ENCODE measurements at regions of chr17 and their contacts with region 1.

Region 1: GRCh38 chr17:27805520-27806146 is 5.3 kb upstream of the NOS2 start:
- DNase-seq: peak; percentile 87 to 88
- ATAC-seq: peak; percentile 94
- H3K4me3 ChIP-seq: peak overlapping the region in 1 of 2 donors; percentile 2
- H3K27ac ChIP-seq: peak overlapping the region in 1 of 2 donors; percentile 48
- H3K4me1 ChIP-seq: no peaks in the 10 kb centered on the region
- H3K27me3 ChIP-seq: no peaks in the 10 kb centered on the region

Region 2: DNA sequence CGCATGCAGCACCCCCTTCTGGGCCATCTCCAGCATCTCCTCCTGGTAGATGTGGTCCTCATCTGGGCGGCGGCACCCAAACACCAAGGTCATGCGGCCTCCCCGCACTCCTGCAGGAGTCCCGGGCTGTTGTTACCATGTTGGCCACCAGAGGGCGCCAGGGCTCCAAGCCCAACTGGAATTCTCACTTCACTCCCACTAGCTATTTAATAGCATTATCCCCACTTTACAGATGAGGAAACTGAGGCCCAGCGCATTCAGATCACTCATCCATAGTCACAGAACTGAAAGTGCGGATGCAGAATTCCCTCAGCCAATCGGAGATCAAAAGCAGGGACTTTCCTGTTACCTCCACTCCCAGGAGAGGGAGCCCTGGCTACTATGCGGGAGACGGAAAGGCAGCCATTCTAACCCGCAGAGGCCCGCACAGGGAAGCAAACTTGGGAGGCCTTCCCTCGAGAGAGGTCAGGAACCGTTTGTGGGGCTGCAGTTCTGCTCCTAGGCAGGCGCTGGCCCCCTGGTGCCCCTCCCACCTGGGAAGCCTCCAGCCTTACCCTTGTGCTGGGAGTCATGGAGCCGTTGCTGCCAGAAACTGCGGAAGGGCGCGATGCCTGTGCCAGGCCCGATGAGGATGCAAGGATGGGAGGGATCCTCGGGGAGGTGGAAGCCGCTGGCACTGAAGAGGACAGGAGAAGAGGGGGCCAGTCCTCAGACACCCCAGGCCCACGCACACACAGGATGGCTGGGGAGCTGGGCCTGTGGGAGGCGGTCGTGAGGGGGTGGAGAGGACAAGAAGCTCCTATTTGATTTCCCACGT is 45.4 kb before region 1 on chr17:
- intact Hi-C with region 1: no loop called
- DNase-seq: peak; percentile 69 to 89
- ATAC-seq: peak; percentile 40
- H3K4me3 ChIP-seq: no peak overlapping the region
- H3K27ac ChIP-seq: no peak overlapping the region
- H3K4me1 ChIP-seq: no peaks in the 10 kb centered on the region
- H3K27me3 ChIP-seq: no peaks in the 10 kb centered on the region

Region 3: GRCh38 chr17:28252436-28252835 is 446.8 kb after region 1 on chr17:
- intact Hi-C with region 1: loop called in 1 of 2 experiments (anchors 10 kb)
- DNase-seq: no peak
- ATAC-seq: no peak
- H3K4me3 ChIP-seq: no peak overlapping the region
- H3K27ac ChIP-seq: no peak overlapping the region
- H3K4me1 ChIP-seq: no peaks in the 10 kb centered on the region
- H3K27me3 ChIP-seq: no peaks in the 10 kb centered on the region